ENCODE measurements at regions of chr16 and their contacts with region 1.

Region 1: DNA sequence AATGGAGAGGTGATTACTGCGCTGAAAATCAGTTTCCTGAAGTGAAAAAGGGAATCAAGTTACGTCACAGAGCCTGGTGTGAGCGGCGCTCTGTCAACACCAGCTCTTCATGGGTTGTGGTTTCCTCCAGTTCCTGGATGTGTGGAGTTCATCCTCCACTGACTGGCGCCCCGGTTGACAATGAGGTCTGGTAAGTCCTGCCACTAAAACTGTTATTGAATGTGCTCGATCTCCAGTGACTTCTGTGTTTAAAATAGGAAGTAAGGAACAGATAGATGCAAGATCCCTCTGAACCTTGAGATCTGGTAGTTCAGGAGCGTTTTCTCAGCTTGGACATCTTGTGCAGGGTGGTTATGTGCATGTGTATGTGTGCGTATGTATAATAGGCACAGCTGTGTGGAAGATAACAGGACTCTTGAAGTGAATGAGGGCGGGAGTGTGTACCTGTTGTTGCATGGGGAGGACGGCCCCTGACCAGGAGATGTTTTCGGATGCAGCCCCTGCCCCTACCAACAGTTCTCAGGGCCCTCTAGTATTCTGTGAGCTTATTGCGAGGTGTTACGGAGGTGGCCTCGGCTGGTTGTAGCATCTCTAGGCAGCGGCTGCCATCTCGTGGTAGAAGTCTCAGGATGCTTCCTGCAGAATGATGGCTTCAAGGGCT is 22.0 kb upstream of the GOT2 start:
- DNase-seq: peak; percentile 88
- ATAC-seq: peak; percentile 99
- H3K4me3 Mint-ChIP-seq: peak overlapping the region; percentile 47
- H3K27ac Mint-ChIP-seq: peak overlapping the region; percentile 59
- H3K4me1 Mint-ChIP-seq: peaks cover 11% of the 10 kb centered on the region
- H3K27me3 Mint-ChIP-seq: peaks cover 2% of the 10 kb centered on the region

Region 2: GRCh38 chr16:58336332-58337089 is 419.6 kb before region 1 on chr16:
- CTCF ChIA-PET with region 1: interaction called, 23 read pairs
- POLR2A ChIA-PET with region 1: no interaction called
- DNase-seq: peak; percentile 92
- ATAC-seq: peak; percentile 96
- H3K4me3 Mint-ChIP-seq: no peak overlapping the region
- H3K27ac Mint-ChIP-seq: no peak overlapping the region
- H3K4me1 Mint-ChIP-seq: peaks cover 8% of the 10 kb centered on the region
- H3K27me3 Mint-ChIP-seq: no peaks in the 10 kb centered on the region

Region 3: DNA sequence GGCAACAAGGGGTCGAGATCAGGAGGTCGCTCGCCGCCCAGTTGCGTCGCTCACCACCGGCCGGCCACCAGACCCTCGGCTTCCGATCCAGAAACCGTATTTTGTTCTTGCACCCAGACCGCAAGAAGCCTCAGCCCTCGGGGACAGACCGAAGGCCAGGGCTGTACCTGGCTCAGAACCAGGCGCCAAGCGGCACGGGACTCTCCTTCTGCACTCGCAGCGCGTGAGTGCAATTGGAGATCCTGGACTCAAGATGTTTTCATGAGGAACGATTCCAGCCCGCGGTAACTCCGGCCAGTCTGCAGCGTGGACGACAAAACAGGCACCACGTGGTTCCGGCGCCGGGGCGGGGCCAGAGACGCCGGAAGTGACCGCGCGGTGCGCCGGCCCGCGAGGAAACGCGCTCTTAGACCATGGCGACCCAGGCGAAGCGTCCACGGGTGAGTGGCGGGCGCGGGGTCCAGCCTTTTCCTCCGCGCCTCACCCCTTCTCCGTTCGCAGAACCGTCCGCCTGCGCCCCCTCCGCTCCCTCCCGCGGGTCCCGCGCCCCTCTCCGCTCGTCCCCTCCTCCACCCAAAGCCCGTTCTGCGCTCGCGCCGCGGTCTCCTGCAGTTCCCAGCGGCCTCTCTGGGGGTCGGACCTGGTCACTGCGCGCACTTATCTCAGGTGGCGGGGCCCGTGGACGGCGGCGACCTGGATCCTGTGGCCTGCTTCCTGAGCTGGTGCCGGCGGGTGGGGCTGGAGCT is 240.8 kb before region 1 on chr16 and contains the start of gene SETD6:
- CTCF ChIA-PET with region 1: interaction called, 27 read pairs
- POLR2A ChIA-PET with region 1: no interaction called
- DNase-seq: peak; percentile 79
- ATAC-seq: peak; percentile 75
- H3K4me3 Mint-ChIP-seq: peak within 1 kb of the TSS; percentile 86
- H3K27ac Mint-ChIP-seq: peak within 1 kb of the TSS; percentile 87
- H3K4me1 Mint-ChIP-seq: peaks cover 32% of the 10 kb centered on the region
- H3K27me3 Mint-ChIP-seq: no peaks in the 10 kb centered on the region
- total RNA-seq, gene SETD6: 16.0 to 16.9 TPM

Region 4: GRCh38 chr16:58684354-58685083 is 71.6 kb before region 1 on chr16 and contains the start of gene SLC38A7:
- CTCF ChIA-PET with region 1: interaction called, 16 read pairs
- POLR2A ChIA-PET with region 1: no interaction called
- DNase-seq: peak; percentile 81
- ATAC-seq: peak; percentile 97
- H3K4me3 Mint-ChIP-seq: peak within 1 kb of the TSS; percentile 92
- H3K27ac Mint-ChIP-seq: peak within 1 kb of the TSS; percentile 83
- H3K4me1 Mint-ChIP-seq: peaks cover 20% of the 10 kb centered on the region
- H3K27me3 Mint-ChIP-seq: peaks cover 3% of the 10 kb centered on the region
- total RNA-seq, gene SLC38A7: 9.9 to 10.3 TPM

Region 5: GRCh38 chr16:58733671-58734458 is 22.3 kb before region 1 on chr16 and contains the start of gene GOT2:
- CTCF ChIA-PET with region 1: interaction called, 21 read pairs
- POLR2A ChIA-PET with region 1: no interaction called
- DNase-seq: peak; percentile 85
- ATAC-seq: peak; percentile 99
- H3K4me3 Mint-ChIP-seq: peak within 1 kb of the TSS; percentile 99
- H3K27ac Mint-ChIP-seq: peak within 1 kb of the TSS; percentile 97
- H3K4me1 Mint-ChIP-seq: peaks cover 32% of the 10 kb centered on the region
- H3K27me3 Mint-ChIP-seq: no peaks in the 10 kb centered on the region
- total RNA-seq, gene GOT2: 91.8 to 96.4 TPM

Region 6: DNA sequence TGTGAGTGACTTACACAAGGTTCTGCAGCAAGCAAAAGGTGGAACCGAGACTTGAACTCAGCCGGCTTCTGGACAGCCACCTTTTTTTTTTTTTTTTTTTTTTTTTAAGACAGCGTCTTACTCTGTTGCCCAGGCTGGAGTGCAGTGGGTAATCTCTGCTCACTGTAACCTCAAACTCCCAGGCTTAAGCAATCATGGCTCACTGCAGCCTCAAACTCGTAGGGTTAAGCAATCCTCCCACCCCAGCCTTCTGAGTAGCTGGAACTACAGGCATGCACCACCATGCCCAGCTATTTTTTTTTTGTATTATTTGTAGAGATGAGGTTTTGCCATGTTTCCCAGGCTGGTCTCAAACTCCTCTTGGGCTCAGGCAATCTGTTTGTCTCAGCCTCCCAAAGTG is 33.2 kb after region 1 on chr16:
- CTCF ChIA-PET with region 1: no interaction called
- POLR2A ChIA-PET with region 1: no interaction called
- DNase-seq: no peak
- ATAC-seq: no peak
- H3K4me3 Mint-ChIP-seq: no peak overlapping the region
- H3K27ac Mint-ChIP-seq: no peak overlapping the region
- H3K4me1 Mint-ChIP-seq: no peaks in the 10 kb centered on the region
- H3K27me3 Mint-ChIP-seq: peaks cover 2% of the 10 kb centered on the region

Region 7: DNA sequence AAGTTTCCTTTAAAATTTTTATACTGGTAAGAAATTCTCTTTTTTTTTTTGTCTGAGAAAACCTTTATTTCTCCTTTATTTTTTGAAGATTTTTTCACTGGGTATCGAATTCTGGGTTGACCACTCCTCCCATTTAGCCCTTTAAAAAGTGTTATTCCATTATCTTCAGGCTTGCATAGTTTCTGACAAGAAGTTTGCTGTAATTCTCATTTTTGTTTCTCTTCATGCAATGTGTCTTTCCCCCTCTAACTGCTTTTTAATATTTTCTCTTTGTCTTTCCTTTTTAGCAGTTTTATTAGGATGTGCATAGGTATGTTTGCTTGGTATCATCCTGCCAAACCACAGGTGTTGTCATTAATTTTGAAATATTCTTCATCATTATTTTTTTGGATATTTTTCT is 45.7 kb after region 1 on chr16:
- CTCF ChIA-PET with region 1: no interaction called
- POLR2A ChIA-PET with region 1: no interaction called
- DNase-seq: no peak
- ATAC-seq: no peak
- H3K4me3 Mint-ChIP-seq: no peak overlapping the region
- H3K27ac Mint-ChIP-seq: no peak overlapping the region
- H3K4me1 Mint-ChIP-seq: no peaks in the 10 kb centered on the region
- H3K27me3 Mint-ChIP-seq: peaks cover 2% of the 10 kb centered on the region